ENCODE measurements at regions of chr7 and their contacts with region 1.

Region 1: DNA sequence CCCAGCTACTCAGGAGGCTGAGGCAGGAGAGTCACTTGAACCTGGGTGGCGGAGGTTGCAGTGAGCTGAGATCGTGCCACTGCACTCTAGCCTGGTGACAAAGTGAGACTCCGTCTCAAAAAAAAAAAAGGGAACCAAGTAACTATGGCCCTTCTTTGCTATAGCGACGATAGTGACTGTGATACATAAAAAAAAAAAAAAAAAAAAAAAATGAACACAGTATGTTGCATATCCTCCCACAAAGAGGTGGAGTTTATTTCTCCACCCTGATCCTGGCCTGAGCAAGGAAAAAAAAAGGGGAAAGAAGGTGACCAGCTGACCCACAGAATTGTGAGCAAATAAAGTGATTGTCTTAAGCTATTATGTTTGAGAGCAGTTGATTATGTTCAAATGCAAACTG is 42.3 kb upstream of the STEAP1B start:
- DNase-seq: no peak
- H3K4me3 ChIP-seq: no peak overlapping the region
- H3K27ac ChIP-seq: no peak overlapping the region
- H3K4me1 ChIP-seq: no peaks in the 10 kb centered on the region
- H3K27me3 ChIP-seq: no peaks in the 10 kb centered on the region
- CTCF ChIP-seq: no peak

Region 2: DNA sequence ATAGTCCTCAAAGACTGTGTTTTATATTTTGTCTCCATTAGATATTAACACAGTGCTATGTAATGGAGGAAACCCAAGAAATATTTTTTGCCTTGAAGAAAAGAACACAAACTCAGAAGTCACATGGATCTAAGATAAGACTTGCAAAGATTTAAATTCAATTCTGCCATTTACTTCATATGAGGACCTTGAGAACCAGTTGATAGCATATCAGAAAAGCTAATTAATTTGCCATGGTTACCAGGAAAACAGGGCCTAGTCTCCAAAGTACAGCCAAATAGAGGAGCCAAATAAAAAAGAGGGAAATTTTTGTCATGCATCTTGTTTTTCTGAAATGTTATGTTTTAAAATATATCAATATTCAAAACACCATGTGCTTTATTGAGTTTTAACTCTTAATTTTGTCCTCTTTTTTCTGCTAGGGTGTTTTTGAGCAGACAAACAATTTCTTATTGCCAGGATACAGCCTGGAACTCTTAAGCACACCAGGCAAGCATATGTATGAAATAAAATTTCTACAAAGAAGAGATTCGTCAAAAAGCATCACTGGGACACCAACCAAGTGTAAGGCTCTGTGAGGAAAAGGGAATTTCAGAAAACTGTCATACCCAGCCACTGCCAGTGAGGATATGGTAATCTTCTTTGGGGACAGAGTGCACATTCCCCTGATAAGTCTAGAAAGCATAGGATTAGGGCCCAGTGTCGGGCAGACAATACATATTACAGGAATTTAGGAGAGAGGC is 291.0 kb after region 1 on chr7:
- CTCF ChIA-PET with region 1: no interaction called
- POLR2A ChIA-PET with region 1: no interaction called
- intact Hi-C with region 1: no loop called
- DNase-seq: no peak
- H3K4me3 ChIP-seq: no peak overlapping the region
- H3K27ac ChIP-seq: no peak overlapping the region
- H3K4me1 ChIP-seq: no peaks in the 10 kb centered on the region
- H3K27me3 ChIP-seq: no peaks in the 10 kb centered on the region
- CTCF ChIP-seq: no peak

Region 3: DNA sequence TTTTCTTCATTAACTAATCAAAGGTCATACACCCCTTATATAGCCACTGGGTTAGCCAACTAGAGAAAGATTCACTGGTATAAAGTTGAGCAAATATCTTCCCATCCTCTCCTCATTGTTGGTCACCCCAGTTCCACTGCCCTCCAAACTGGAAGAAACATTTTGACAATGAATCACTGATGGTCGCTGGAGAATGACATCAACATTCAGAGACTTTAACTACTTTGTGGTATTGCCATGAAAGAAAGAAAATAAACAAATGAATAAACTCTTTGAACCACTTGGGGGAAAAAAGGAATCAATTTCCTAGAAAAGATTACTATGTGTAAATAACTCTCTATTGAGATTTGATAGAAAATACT is 448.3 kb after region 1 on chr7:
- CTCF ChIA-PET with region 1: no interaction called
- POLR2A ChIA-PET with region 1: interaction called, 26 read pairs
- intact Hi-C with region 1: no loop called
- DNase-seq: no peak
- H3K4me3 ChIP-seq: no peak overlapping the region
- H3K27ac ChIP-seq: no peak overlapping the region
- H3K4me1 ChIP-seq: no peaks in the 10 kb centered on the region
- H3K27me3 ChIP-seq: no peaks in the 10 kb centered on the region
- CTCF ChIP-seq: no peak

Region 4: GRCh38 chr7:23123007-23123406 is 580.8 kb after region 1 on chr7:
- CTCF ChIA-PET with region 1: interaction called, 10 read pairs
- POLR2A ChIA-PET with region 1: no interaction called
- intact Hi-C with region 1: no loop called
- DNase-seq: no peak
- H3K4me3 ChIP-seq: no peak overlapping the region
- H3K27ac ChIP-seq: no peak overlapping the region
- H3K4me1 ChIP-seq: no peaks in the 10 kb centered on the region
- H3K27me3 ChIP-seq: no peaks in the 10 kb centered on the region
- CTCF ChIP-seq: no peak